Breast epithelium (tissue), 4 donors: ENCODE measurements at regions of chr4 and their contacts with region 1.

Region 1: DNA sequence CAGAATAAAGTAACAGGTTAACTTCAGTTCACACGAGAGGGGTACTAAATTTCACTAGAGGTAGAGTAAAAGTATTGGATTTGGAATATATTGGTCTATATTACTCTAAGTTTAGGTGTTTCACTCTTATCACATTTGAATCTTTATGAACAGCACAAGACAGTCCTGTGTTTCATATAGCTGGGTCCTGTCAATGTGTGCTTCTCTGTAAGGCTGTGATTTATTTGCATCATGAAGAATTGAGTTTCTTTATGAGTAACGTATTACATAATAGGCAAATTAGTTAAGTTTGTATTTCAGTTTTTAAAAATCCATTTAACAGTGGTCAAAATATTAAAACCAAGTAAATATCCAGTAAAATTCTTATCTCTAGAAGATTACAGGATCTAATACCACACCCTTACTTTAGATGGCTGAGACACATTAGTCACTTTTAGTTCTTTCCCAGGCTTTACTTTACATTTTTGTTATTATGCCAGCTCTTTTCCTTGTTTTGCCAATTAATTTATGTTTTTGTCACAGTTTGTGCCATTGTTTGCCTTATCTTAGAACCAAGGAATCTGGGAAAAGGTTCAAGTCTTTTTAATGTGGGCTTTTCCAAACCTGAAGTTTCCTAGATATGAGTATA is 32.1 kb downstream of the NUDT6 start:
- DNase-seq: no peak
- H3K4me3 ChIP-seq: no peak overlapping the region
- H3K27ac ChIP-seq: peak overlapping the region; percentile 16 to 50
- H3K4me1 ChIP-seq: no peaks in the 10 kb centered on the region
- H3K27me3 ChIP-seq: no peaks in the 10 kb centered on the region
- CTCF ChIP-seq: no peak
- POLR2A ChIP-seq: no peak

Region 2: GRCh38 chr4:120995266-120996010 is 1894.8 kb before region 1 on chr4:
- intact Hi-C with region 1: no loop called
- DNase-seq: no peak
- H3K4me3 ChIP-seq: no peak overlapping the region
- H3K27ac ChIP-seq: no peak overlapping the region
- H3K4me1 ChIP-seq: no peaks in the 10 kb centered on the region
- H3K27me3 ChIP-seq: no peaks in the 10 kb centered on the region
- CTCF ChIP-seq: no peak
- POLR2A ChIP-seq: no peak

Region 3: DNA sequence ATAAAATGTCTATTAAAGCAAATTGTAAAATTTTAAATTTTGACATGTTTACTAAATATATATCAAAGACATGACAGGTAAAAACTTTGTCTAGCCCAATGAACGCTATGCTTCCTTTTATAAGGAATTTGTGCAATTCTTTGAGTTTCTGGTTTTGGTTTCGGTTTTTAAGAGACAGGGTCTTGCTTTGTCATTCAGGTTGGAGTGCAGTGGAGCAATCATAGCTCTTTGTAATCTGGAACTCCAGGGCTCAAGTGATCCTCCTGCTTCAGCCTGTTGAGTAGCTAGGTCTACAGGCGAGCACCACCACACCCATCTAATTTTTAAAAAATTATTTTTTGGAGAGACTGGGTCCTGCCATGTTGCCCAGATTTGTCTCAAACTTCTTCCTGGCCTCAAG is 677.4 kb before region 1 on chr4:
- intact Hi-C with region 1: loop called (anchors 5 kb)
- DNase-seq: no peak
- H3K4me3 ChIP-seq: no peak overlapping the region
- H3K27ac ChIP-seq: no peak overlapping the region
- H3K4me1 ChIP-seq: no peaks in the 10 kb centered on the region
- H3K27me3 ChIP-seq: no peaks in the 10 kb centered on the region
- CTCF ChIP-seq: no peak
- POLR2A ChIP-seq: no peak